Ascending aorta (tissue), 2 donors: ENCODE measurements at regions of chr3 and their contacts with region 1.

Region 1: DNA sequence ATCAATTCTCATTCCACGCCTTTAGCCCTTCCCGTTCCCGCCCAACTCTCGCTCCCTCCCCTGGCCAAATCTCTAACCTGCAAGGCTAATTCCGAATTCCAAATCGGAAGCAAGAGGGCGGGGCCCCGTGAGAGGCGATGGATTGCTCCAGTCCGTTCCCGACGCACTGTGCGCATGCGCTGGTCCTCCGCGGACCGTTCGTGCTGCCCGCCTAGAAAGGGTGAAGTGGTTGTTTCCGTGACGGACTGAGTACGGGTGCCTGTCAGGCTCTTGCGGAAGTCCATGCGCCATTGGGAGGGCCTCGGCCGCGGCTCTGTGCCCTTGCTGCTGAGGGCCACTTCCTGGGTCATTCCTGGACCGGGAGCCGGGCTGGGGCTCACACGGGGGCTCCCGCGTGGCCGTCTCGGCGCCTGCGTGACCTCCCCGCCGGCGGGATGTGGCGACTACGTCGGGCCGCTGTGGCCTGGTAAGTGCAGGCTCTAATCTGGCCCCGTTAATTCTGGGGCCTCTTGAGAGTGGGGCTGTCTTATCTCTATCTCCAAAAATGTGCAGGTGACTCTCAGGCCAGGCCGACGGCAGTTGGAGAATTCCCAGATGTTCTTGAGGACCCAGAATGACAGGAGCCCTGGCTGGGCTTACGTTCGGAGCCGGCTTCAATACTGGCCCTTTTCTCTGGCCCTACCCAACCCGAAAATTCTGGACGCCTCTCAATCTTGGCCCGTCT is at the start of gene OPA1:
- DNase-seq: peak; percentile 91 to 98
- H3K4me3 ChIP-seq: peak within 1 kb of the TSS; percentile 82 to 84
- H3K27ac ChIP-seq: peak within 1 kb of the TSS; percentile 77 to 88
- H3K4me1 ChIP-seq: peaks cover 4 to 10% of the 10 kb centered on the region in 2 donors
- H3K27me3 ChIP-seq: no peaks in the 10 kb centered on the region
- CTCF ChIP-seq: peak in 2 of 3 experiments; percentile 19 to 37
- total RNA-seq, gene OPA1: 19.5 TPM

Region 2: DNA sequence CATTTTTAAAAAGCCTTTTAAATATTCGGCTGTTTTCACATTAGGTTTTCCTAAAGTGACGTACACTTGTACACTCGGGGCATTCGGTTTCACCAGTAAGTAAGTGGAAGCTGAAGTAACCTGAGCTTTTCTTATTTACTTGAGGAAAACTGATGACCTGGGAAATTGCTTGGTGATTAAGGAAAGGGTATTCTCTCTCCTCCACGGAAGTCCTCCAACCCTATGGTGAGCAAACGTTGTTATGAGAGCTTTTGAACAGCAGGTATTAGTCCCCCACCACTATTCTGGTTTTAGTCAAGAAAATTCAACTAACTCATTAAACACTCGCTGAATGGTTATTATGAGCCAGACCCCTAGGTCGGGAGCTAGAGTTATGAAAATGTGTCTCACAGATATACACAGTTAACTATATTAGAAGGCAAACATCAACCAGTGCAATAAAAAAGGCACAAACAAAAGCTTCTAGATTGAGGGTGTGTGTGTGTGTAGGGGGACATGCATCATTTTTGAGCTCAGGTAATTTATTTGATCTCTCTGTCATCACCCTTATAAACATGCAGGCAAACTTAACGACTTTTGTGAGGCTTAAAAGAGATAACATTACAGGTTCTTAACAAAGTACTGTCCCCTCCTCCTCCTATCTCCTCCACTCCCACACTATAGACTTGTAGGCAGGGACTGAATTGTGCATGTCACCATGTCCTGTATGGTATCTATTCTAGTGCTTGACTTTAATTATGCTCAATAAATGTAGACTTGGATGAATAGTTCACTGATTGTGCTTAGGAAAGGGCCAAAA is 532.2 kb before region 1 on chr3:
- intact Hi-C with region 1: no loop called
- DNase-seq: no peak
- H3K4me3 ChIP-seq: no peak overlapping the region
- H3K27ac ChIP-seq: no peak overlapping the region
- H3K4me1 ChIP-seq: no peaks in the 10 kb centered on the region
- H3K27me3 ChIP-seq: no peaks in the 10 kb centered on the region
- CTCF ChIP-seq: no peak

Region 3: GRCh38 chr3:194583604-194584318 is 990.7 kb after region 1 on chr3:
- intact Hi-C with region 1: loop called (anchors 5 kb)
- DNase-seq: peak; percentile 54 to 93
- H3K4me3 ChIP-seq: peak overlapping the region; percentile 79 to 83
- H3K27ac ChIP-seq: peak overlapping the region; percentile 96 to 97
- H3K4me1 ChIP-seq: peaks cover 15 to 46% of the 10 kb centered on the region in 2 donors
- H3K27me3 ChIP-seq: no peaks in the 10 kb centered on the region
- CTCF ChIP-seq: peak in 1 of 3 experiments; percentile 6

Region 4: DNA sequence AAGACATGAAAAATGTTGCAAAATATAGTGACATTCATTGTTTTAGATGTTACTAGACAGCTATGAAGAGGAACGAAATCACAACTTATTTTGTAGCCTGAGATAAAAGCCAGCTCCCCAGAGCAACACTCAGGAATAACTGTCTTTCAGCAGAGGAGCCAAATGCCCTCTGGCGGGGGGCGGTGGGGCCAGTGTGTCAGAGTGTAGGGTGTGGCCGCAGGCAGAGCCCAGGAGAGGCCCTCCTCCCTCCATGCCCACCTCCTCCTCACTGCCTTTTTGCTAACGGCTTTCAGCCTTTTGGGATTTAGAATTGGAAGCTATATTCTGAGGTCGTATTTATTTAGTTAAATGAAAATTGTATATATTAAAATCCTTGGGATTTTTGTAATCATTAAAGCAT is 1973.7 kb after region 1 on chr3:
- intact Hi-C with region 1: no loop called
- DNase-seq: no peak
- H3K4me3 ChIP-seq: no peak overlapping the region
- H3K27ac ChIP-seq: no peak overlapping the region
- H3K4me1 ChIP-seq: no peaks in the 10 kb centered on the region
- H3K27me3 ChIP-seq: no peaks in the 10 kb centered on the region
- CTCF ChIP-seq: no peak